ENCODE measurements at regions of chr22 and their contacts with region 1.

Region 1: GRCh38 chr22:21001560-21002325 is at the start of gene THAP7:
- DNase-seq: peak; percentile 79 to 87
- H3K4me3 ChIP-seq: peak within 1 kb of the TSS; percentile 89
- H3K27ac ChIP-seq: peak within 1 kb of the TSS; percentile 89
- H3K4me1 ChIP-seq: peaks cover 8% of the 10 kb centered on the region
- H3K27me3 ChIP-seq: no peaks in the 10 kb centered on the region
- CTCF ChIP-seq: no peak
- total RNA-seq, gene THAP7: 16.4 and 17.0 TPM in 2 replicates

Region 2: GRCh38 chr22:20839837-20840645 is 161.7 kb before region 1 on chr22:
- CTCF ChIA-PET with region 1: no interaction called
- POLR2A ChIA-PET with region 1: interaction called, 12 read pairs
- intact Hi-C with region 1: no loop called
- DNase-seq: no peak
- H3K4me3 ChIP-seq: no peak overlapping the region
- H3K27ac ChIP-seq: no peak overlapping the region
- H3K4me1 ChIP-seq: peaks cover 21% of the 10 kb centered on the region
- H3K27me3 ChIP-seq: no peaks in the 10 kb centered on the region
- CTCF ChIP-seq: no peak

Region 3: GRCh38 chr22:20885557-20886323 is 116.0 kb before region 1 on chr22:
- CTCF ChIA-PET with region 1: no interaction called
- POLR2A ChIA-PET with region 1: no interaction called
- intact Hi-C with region 1: loop called (anchors 1 kb)
- DNase-seq: peak; percentile 80 to 85
- H3K4me3 ChIP-seq: no peak overlapping the region
- H3K27ac ChIP-seq: 0 out of 2 replicates have a peak overlapping the region, but pooled peaks have one; percentile 42
- H3K4me1 ChIP-seq: peaks cover 28% of the 10 kb centered on the region
- H3K27me3 ChIP-seq: no peaks in the 10 kb centered on the region
- CTCF ChIP-seq: peak; percentile 82

Region 4: GRCh38 chr22:20899827-20900423 is 101.8 kb before region 1 on chr22:
- CTCF ChIA-PET with region 1: no interaction called
- POLR2A ChIA-PET with region 1: no interaction called
- intact Hi-C with region 1: no loop called
- DNase-seq: no peak
- H3K4me3 ChIP-seq: no peak overlapping the region
- H3K27ac ChIP-seq: no peak overlapping the region
- H3K4me1 ChIP-seq: peaks cover 10% of the 10 kb centered on the region
- H3K27me3 ChIP-seq: no peaks in the 10 kb centered on the region
- CTCF ChIP-seq: no peak

Region 5: GRCh38 chr22:20981787-20982562 is 19.8 kb before region 1 on chr22 and contains the start of gene LZTR1:
- CTCF ChIA-PET with region 1: no interaction called
- POLR2A ChIA-PET with region 1: no interaction called
- intact Hi-C with region 1: loop called (anchors 1 kb)
- DNase-seq: peak; percentile 50 to 63
- H3K4me3 ChIP-seq: peak within 1 kb of the TSS; percentile 63
- H3K27ac ChIP-seq: 0 out of 2 replicates have a peak within 1 kb of the TSS, but pooled peaks have one; percentile 26
- H3K4me1 ChIP-seq: peaks cover 8% of the 10 kb centered on the region; the same call in 1 of the 2 replicates
- H3K27me3 ChIP-seq: no peaks in the 10 kb centered on the region
- CTCF ChIP-seq: peak; percentile 56; the same call in 1 of the 2 replicates
- total RNA-seq, gene LZTR1: 23.2 and 23.4 TPM in 2 replicates

Region 6: DNA sequence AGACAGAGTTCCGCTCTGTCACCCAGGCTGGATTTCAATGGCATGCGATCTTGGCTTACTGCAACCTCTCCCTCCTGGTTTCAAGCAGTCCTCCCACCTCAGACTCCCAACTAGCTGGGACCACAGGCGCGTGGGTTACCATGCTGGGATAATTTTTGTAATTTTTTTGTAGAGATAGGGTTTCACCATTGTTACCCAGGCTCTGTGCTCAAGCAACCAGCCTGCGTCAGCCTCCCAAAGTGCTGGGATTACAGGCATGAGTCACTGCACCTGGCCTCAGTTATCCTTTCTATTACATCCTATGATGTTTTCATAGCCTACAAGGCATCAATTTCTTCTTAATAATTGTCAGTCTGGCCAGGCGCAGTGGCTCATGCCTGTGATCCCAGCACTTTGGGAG is 80.5 kb after region 1 on chr22:
- CTCF ChIA-PET with region 1: no interaction called
- POLR2A ChIA-PET with region 1: no interaction called
- intact Hi-C with region 1: no loop called
- DNase-seq: no peak
- H3K4me3 ChIP-seq: no peak overlapping the region
- H3K27ac ChIP-seq: no peak overlapping the region
- H3K4me1 ChIP-seq: no peaks in the 10 kb centered on the region
- H3K27me3 ChIP-seq: no peaks in the 10 kb centered on the region
- CTCF ChIP-seq: no peak

Region 7: GRCh38 chr22:21102659-21103267 is 101.0 kb after region 1 on chr22:
- CTCF ChIA-PET with region 1: no interaction called
- POLR2A ChIA-PET with region 1: no interaction called
- intact Hi-C with region 1: loop called (anchors 10 kb)
- DNase-seq: peak; percentile 37 to 51
- H3K4me3 ChIP-seq: peak overlapping the region; percentile 33; the same call in 1 of the 2 replicates
- H3K27ac ChIP-seq: no peak overlapping the region
- H3K4me1 ChIP-seq: peaks cover 34% of the 10 kb centered on the region
- H3K27me3 ChIP-seq: no peaks in the 10 kb centered on the region
- CTCF ChIP-seq: peak; percentile 69

Region 8: GRCh38 chr22:21457023-21457787 is 455.5 kb after region 1 on chr22:
- CTCF ChIA-PET with region 1: no interaction called
- POLR2A ChIA-PET with region 1: no interaction called
- intact Hi-C with region 1: no loop called
- DNase-seq: peak; percentile 33 to 89
- H3K4me3 ChIP-seq: no peak overlapping the region
- H3K27ac ChIP-seq: peak overlapping the region; percentile 18; the same call in 1 of the 2 replicates
- H3K4me1 ChIP-seq: peaks cover 20% of the 10 kb centered on the region
- H3K27me3 ChIP-seq: no peaks in the 10 kb centered on the region
- CTCF ChIP-seq: no peak

Region 9: DNA sequence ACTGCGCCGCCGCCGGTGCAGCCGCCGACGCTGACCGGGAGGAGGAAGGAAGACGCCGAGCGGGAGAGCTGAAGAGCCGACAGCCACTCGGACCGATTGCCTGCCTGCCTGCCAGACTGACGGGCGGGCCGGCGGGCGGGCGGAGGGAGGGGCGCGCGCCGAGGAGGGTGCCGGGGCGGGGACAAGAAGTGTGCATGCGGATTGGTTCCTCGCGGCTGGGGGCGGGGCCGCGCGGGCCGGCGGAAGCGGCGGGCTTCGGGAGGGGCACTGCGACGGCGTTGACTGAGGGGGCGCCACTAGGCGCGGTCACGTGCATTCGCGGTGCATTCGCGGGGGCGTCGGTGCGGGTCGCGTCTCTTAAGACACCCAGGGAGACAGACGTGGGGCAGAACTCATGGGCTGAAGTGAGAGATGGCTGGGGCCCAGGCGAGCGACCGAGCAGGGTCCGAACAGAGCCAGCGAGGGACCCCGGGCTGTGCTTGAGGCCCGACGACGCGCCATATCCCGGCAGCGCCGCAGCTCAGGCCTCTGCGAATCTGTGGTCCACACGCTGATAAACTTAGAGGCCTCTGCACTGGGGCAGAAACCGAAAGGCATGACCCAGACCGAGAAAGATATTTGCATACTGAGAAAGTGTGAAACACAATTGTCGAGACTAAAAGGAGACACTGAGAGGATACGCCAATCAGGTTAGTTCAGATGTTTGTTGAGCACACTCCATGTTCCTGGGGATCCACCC is 866.0 kb after region 1 on chr22 and contains the start of gene MAPK1:
- CTCF ChIA-PET with region 1: no interaction called
- POLR2A ChIA-PET with region 1: no interaction called
- intact Hi-C with region 1: no loop called
- DNase-seq: peak; percentile 66 to 84
- H3K4me3 ChIP-seq: peak within 1 kb of the TSS; percentile 84
- H3K27ac ChIP-seq: no peak within 1 kb of the TSS
- H3K4me1 ChIP-seq: peaks cover 14% of the 10 kb centered on the region
- H3K27me3 ChIP-seq: no peaks in the 10 kb centered on the region
- CTCF ChIP-seq: no peak; the same call in 1 of the 2 replicates
- total RNA-seq, gene MAPK1: 66.7 and 82.8 TPM in 2 replicates